Dendritic cell treated with granulocyte-macrophage colony-stimulating factor and Interleukin-4, amounts not matched to agents 40 ng/mL and 50 ng/mL, for 4 days (primary cell): ENCODE measurements at regions of chr18 and their contacts with region 1.

Region 1: DNA sequence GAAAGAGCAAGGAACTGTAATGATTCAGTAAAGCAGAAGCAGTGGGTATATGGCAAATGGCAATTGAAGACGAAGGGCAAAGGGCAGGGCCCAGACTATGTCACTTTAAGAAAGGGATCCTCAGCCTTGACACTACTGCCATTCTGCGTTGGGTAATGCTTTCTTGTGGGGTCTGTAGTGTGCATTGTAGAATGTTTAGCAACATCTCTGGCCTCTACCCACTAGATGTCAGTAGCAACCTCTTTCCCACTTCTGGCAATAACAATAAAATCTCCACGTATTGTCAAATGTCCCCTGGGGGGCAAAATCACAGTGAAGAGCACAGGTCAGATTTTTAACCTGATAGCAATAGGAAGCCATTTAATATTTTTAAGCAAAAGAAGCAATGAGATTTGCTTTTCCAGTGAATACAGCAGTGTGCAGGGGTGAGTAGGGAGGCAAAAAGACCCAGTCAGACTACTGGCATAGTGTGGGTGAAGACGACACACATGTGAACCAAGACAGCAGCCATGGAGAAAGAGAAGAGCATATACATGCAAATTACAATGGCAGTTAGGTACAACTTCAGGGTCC is 209.5 kb downstream of the DYM start:
- H3K4me3 Mint-ChIP-seq: no peak overlapping the region
- H3K27ac Mint-ChIP-seq: peak overlapping the region; percentile 7
- H3K4me1 Mint-ChIP-seq: peaks cover 22% of the 10 kb centered on the region
- H3K27me3 Mint-ChIP-seq: no peaks in the 10 kb centered on the region

Region 2: DNA sequence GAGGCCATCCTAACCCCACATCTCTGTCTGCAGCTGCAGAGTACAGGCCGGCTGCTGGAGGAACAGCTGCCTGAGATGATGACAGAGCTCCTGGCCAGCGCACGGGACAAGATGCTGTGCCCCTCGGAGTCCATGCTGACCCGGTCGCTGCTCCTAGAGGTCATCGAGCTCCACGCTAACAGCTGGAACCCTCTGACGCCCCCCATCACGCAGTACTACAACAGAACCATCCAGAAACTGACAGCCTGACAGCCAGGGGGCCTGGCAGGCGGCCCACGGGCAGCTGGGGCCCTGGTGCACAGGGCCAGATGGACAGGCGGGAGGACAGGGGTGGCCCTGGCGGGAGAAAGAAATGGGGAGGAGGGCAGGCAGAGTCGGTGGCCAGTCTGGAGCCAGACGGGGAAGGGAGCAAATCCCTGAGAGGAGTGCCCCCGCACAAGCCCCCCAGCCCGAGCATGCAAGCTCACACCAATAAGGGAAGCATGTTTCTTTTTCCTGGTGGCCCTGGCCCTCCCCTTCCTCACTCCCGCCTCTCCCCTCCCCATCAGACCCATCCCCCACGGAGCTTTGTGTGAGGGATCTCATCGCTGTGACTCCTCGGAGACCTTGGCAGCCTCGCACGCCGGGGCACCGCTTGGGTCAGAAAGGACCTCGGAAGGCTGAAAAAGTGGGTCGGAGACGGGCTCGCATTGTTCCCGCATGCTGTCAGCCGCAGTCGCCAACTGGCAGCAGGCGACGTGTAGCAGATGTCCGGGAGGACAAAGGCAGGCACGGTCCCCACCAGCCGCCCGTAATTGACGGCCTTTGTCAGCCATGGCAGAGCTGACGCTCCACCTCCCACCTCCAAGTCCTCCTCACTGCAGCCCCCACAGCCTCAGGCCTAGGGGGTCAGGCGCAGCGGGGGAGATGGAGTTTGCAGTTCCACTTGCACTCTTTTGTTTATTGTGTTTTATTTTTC is 391.3 kb before region 1 on chr18:
- intact Hi-C with region 1: loop called (anchors 10 kb)
- H3K4me3 Mint-ChIP-seq: no peak overlapping the region
- H3K27ac Mint-ChIP-seq: peak overlapping the region; percentile 76
- H3K4me1 Mint-ChIP-seq: peaks cover 62% of the 10 kb centered on the region
- H3K27me3 Mint-ChIP-seq: no peaks in the 10 kb centered on the region

Region 3: DNA sequence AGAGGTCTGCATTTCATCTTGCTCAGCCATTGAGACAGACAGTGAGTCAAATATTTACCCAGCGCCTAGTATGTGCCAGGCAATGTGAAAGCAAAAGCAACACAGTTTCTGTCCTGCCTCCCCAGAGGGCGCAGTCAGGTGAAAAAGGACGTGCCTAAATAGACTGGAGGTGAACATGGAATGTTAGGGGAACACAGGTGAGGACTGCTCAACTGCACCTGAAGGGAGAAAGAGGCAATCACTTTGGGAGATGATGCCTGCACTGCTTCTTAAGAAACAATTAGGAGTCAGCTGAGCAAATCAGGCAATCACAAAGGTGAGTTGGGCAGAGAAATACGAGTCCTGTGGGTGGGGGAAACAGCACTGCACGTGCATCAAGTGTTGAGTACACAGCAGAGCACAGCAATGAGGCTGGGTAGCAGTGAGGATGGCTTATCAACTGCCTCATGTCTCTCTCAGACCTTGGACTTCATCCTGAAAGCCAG is 81.8 kb before region 1 on chr18:
- intact Hi-C with region 1: no loop called
- H3K4me3 Mint-ChIP-seq: no peak overlapping the region
- H3K27ac Mint-ChIP-seq: no peak overlapping the region
- H3K4me1 Mint-ChIP-seq: peaks cover 35% of the 10 kb centered on the region
- H3K27me3 Mint-ChIP-seq: peaks cover 5% of the 10 kb centered on the region

Region 4: GRCh38 chr18:49304751-49305150 is 53.8 kb after region 1 on chr18:
- intact Hi-C with region 1: no loop called
- H3K4me3 Mint-ChIP-seq: no peak overlapping the region
- H3K27ac Mint-ChIP-seq: no peak overlapping the region
- H3K4me1 Mint-ChIP-seq: no peaks in the 10 kb centered on the region
- H3K27me3 Mint-ChIP-seq: no peaks in the 10 kb centered on the region

Region 5: DNA sequence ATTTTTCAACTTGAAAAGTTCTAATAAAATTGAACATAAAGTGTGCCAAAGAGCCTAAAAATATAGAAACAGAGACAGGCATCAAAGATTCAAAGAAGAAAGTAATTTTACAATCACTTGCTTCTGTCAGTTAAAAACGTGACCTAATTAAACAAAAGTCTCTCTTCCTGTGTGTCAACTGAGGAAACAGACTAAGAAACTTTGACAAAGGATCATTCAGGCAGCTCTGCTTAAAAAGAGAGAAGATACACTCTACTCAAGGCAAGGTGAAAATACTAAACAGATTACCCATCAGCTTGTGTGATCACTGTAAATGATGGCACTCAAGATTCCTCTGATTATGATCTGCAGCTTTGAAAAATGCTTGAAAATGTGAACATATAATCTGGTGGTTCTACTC is 161.8 kb after region 1 on chr18:
- intact Hi-C with region 1: loop called (anchors 5 kb)
- H3K4me3 Mint-ChIP-seq: no peak overlapping the region
- H3K27ac Mint-ChIP-seq: no peak overlapping the region
- H3K4me1 Mint-ChIP-seq: peaks cover 13% of the 10 kb centered on the region
- H3K27me3 Mint-ChIP-seq: no peaks in the 10 kb centered on the region